Naive thymus-derived CD4-positive, alpha-beta T cell (primary cell): ENCODE measurements at regions of chrX and their contacts with region 1.

Region 1: GRCh38 chrX:38803586-38804431 is 2.5 kb downstream of the MID1IP1 start:
- DNase-seq: peak in 5 of 9 donors; percentile 35 to 83 (median 41)
- ATAC-seq: peak; percentile 68
- H3K4me3 ChIP-seq: peak overlapping the region; percentile 74
- H3K4me3 Mint-ChIP-seq: peak overlapping the region; percentile 88 to 95 (median 93)
- H3K27ac ChIP-seq: peak overlapping the region; percentile 77
- H3K27ac Mint-ChIP-seq: peak overlapping the region; percentile 92 to 98 (median 95)
- H3K4me1 ChIP-seq: peaks cover 6 to 10% of the 10 kb centered on the region in 2 donors
- H3K4me1 Mint-ChIP-seq: peaks cover 0 to 33% (median 23%) of the 10 kb centered on the region in 7 donors
- H3K27me3 ChIP-seq: no peaks in the 10 kb centered on the region
- H3K27me3 Mint-ChIP-seq: no peaks in the 10 kb centered on the region

Region 2: DNA sequence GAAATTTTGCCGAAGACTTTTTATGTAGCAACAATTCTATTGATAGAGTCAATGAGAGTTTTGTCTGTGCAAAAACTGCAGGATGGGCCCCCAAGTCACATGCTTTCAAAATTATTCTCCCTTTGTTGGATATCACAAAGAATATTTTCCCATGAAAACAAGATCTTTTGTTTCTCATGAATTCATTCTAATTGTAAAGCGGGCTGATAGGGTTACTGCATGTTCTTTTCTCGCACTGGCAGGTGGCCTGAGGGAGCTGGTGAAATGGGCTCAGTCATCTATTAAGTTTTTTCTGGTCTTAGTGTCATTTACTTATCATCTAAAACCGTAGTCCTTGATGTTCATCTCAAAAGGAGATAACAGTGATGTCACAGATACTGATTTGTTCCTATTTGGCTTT is 41.6 kb after region 1 on chrX:
- CTCF ChIA-PET with region 1: no interaction called
- POLR2A ChIA-PET with region 1: interaction called, 3 read pairs
- intact Hi-C with region 1: loop called in 1 of 2 experiments (anchors 5 kb)
- DNase-seq: no peak
- ATAC-seq: no peak
- H3K4me3 ChIP-seq: no peak overlapping the region
- H3K4me3 Mint-ChIP-seq: no peak overlapping the region
- H3K27ac ChIP-seq: no peak overlapping the region
- H3K27ac Mint-ChIP-seq: no peak overlapping the region
- H3K4me1 ChIP-seq: peaks cover 0 to 5% of the 10 kb centered on the region in 2 donors
- H3K4me1 Mint-ChIP-seq: peaks cover 4 to 18% (median 10%) of the 10 kb centered on the region in 7 donors
- H3K27me3 ChIP-seq: no peaks in the 10 kb centered on the region
- H3K27me3 Mint-ChIP-seq: no peaks in the 10 kb centered on the region

Region 3: GRCh38 chrX:38985375-38985774 is 181.6 kb after region 1 on chrX:
- CTCF ChIA-PET with region 1: interaction called, 12 read pairs
- POLR2A ChIA-PET with region 1: interaction called, 11 read pairs
- intact Hi-C with region 1: loop called (anchors 1 kb)
- DNase-seq: peak in 6 of 9 donors; percentile 10 to 45 (median 25)
- ATAC-seq: peak; percentile 60
- H3K4me3 ChIP-seq: no peak overlapping the region
- H3K4me3 Mint-ChIP-seq: no peak overlapping the region
- H3K27ac ChIP-seq: no peak overlapping the region
- H3K27ac Mint-ChIP-seq: no peak overlapping the region
- H3K4me1 ChIP-seq: no peaks in the 10 kb centered on the region
- H3K4me1 Mint-ChIP-seq: peaks cover 0 to 7% (median 4%) of the 10 kb centered on the region in 7 donors
- H3K27me3 ChIP-seq: no peaks in the 10 kb centered on the region
- H3K27me3 Mint-ChIP-seq: no peaks in the 10 kb centered on the region

Region 4: DNA sequence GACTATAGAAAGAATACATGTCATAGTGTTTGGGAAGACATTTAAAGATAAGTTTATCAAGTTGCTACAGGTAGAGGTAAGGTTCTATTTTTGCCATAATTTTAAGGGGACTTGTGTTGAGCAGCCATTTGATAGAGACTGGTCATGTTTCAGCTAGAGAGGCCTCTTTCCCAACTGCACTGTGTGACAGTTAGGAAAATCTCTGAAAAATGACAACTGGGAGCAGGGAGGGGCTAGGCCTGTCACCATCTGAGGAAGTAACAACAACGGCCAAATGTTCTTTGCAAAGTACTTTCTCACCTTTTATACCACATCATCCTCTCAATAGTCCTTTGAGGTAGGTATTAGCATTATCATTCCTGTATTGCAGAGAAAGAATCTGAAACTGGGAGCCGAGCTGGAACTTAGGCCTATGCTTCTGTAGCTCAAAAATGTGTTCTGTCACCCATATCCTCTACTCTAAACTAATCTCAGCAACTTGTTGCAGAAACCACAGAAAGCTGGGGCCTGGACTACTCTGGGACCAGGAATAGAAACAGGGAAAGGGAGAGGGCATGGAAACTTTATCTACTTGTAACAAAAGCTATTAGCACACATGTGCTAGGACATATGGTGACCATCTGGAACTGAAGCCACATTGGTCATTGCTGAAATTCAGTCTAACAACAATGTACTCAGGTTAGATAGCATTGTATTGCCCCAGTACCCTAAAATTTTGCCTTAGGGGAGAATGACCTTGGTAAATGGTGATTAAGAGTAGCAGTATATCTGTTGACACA is 196.3 kb after region 1 on chrX:
- CTCF ChIA-PET with region 1: no interaction called
- POLR2A ChIA-PET with region 1: no interaction called
- intact Hi-C with region 1: no loop called
- DNase-seq: no peak
- ATAC-seq: no peak
- H3K4me3 ChIP-seq: no peak overlapping the region
- H3K4me3 Mint-ChIP-seq: no peak overlapping the region
- H3K27ac ChIP-seq: no peak overlapping the region
- H3K27ac Mint-ChIP-seq: no peak overlapping the region
- H3K4me1 ChIP-seq: no peaks in the 10 kb centered on the region
- H3K4me1 Mint-ChIP-seq: peaks cover 0 to 12% (median 2%) of the 10 kb centered on the region in 7 donors
- H3K27me3 ChIP-seq: no peaks in the 10 kb centered on the region
- H3K27me3 Mint-ChIP-seq: no peaks in the 10 kb centered on the region

Region 5: DNA sequence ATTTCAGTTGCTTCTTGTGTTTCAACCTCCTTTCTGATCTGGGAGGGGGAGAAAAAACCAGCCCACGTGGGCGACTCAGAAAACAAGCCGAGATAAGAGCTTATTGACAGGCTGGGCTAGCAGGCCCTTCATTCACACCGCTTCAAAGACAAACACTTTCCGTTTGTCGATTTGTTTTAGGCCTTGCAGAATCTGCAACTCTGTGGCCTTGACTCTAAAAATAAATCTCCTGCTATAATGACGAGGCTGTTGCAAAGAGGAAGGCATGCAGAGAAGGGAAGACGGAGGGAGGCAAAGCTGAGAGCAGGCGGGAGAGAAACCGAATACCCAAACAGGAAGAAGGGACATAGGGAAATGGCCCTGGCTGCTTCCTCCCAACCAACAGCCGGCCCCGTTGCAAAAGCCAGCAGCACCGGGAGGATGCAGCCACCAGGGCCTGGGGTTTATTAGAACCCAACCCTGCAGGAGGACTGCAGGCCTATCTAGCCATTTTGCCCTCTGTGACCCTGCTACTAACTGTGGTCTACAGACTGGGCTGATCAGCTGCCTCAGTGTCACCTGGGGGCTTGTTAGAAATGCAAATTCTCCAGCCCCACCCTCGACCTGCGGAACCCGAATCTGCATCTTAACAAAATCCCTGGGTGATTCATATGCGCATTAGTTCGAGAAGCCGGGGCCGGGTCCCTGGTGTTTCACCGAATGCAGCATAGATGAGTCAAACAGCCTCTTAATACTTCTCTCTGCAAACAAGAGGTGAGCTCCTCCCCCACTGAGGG is 968.4 kb after region 1 on chrX:
- CTCF ChIA-PET with region 1: no interaction called
- POLR2A ChIA-PET with region 1: no interaction called
- intact Hi-C with region 1: loop called (anchors 10 kb)
- DNase-seq: peak in 6 of 9 donors; percentile 18 to 52 (median 30)
- ATAC-seq: peak; percentile 63
- H3K4me3 ChIP-seq: peak overlapping the region; percentile 17
- H3K4me3 Mint-ChIP-seq: peak overlapping the region; percentile 43 to 80 (median 74)
- H3K27ac ChIP-seq: peak overlapping the region; percentile 43
- H3K27ac Mint-ChIP-seq: peak overlapping the region; percentile 86 to 98 (median 94)
- H3K4me1 ChIP-seq: peaks cover 26 to 32% of the 10 kb centered on the region in 2 donors
- H3K4me1 Mint-ChIP-seq: peaks cover 20 to 50% (median 43%) of the 10 kb centered on the region in 7 donors
- H3K27me3 ChIP-seq: no peaks in the 10 kb centered on the region
- H3K27me3 Mint-ChIP-seq: no peaks in the 10 kb centered on the region

Region 6: GRCh38 chrX:40169193-40170101 is 1365.6 kb after region 1 on chrX:
- CTCF ChIA-PET with region 1: no interaction called
- POLR2A ChIA-PET with region 1: interaction called, 3 read pairs
- intact Hi-C with region 1: loop called in 1 of 2 experiments (anchors 5 kb)
- DNase-seq: peak in 8 of 9 donors; percentile 65 to 81 (median 74)
- ATAC-seq: peak; percentile 79
- H3K4me3 ChIP-seq: peak overlapping the region; percentile 51
- H3K4me3 Mint-ChIP-seq: peak overlapping the region; percentile 86 to 94 (median 90)
- H3K27ac ChIP-seq: peak overlapping the region; percentile 98
- H3K27ac Mint-ChIP-seq: peak overlapping the region; percentile 96 to 99 (median 98)
- H3K4me1 ChIP-seq: peaks cover 14 to 31% of the 10 kb centered on the region in 2 donors
- H3K4me1 Mint-ChIP-seq: peaks cover 17 to 64% (median 40%) of the 10 kb centered on the region in 7 donors
- H3K27me3 ChIP-seq: no peaks in the 10 kb centered on the region
- H3K27me3 Mint-ChIP-seq: no peaks in the 10 kb centered on the region

Region 7: GRCh38 chrX:40647307-40648197 is 1843.7 kb after region 1 on chrX and contains the start of gene CXorf38:
- CTCF ChIA-PET with region 1: no interaction called
- POLR2A ChIA-PET with region 1: no interaction called
- intact Hi-C with region 1: loop called in 1 of 2 experiments (anchors 10 kb)
- DNase-seq: peak; percentile 86 to 99 (median 95)
- ATAC-seq: peak; percentile 85
- H3K4me3 ChIP-seq: peak within 1 kb of the TSS; percentile 73
- H3K4me3 Mint-ChIP-seq: peak within 1 kb of the TSS; percentile 89 to 96 (median 94)
- H3K27ac ChIP-seq: peak within 1 kb of the TSS; percentile 89
- H3K27ac Mint-ChIP-seq: peak within 1 kb of the TSS; percentile 88 to 99 (median 95)
- H3K4me1 ChIP-seq: peaks cover 3 to 19% of the 10 kb centered on the region in 2 donors
- H3K4me1 Mint-ChIP-seq: peaks cover 16 to 51% (median 31%) of the 10 kb centered on the region in 7 donors
- H3K27me3 ChIP-seq: no peaks in the 10 kb centered on the region
- H3K27me3 Mint-ChIP-seq: no peaks in the 10 kb centered on the region
- total RNA-seq, gene CXorf38: 15.0 to 25.4 (median 22.2) TPM